Heart right ventricle (tissue), 16 donors: ENCODE measurements at regions of chr4 and their contacts with region 1.

Region 1: GRCh38 chr4:140153718-140154571 is at the start of gene MAML3:
- DNase-seq: peak; percentile 95
- ATAC-seq: peak; percentile 62 to 83 (median 74)
- H3K4me3 ChIP-seq: peak within 1 kb of the TSS; percentile 65 to 92 (median 84)
- H3K27ac ChIP-seq: peak within 1 kb of the TSS; percentile 85 to 100 (median 99)
- H3K4me1 ChIP-seq: peaks cover 0 to 44% (median 7%) of the 10 kb centered on the region in 9 donors
- H3K27me3 ChIP-seq: no peaks in the 10 kb centered on the region
- CTCF ChIP-seq: no peak
- total RNA-seq, gene MAML3: 1.3 to 4.6 (median 2.8) TPM

Region 2: DNA sequence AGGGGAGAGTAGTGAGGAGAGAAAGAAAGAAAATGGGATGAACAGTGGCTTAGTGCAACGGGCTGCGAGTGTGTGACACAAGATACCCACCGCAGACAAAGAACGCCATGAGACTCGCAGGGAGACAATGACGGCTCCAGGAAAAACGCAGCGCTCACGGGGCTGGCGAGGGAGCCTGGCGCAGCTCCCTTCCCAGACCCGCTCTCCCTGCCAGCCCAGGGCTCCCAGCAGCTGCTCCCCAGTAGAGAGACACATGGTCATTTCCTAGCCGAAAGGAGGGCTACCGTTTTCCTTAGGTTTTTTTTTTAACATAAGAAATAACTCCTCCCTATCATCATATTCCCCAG is 149.4 kb before region 1 on chr4:
- intact Hi-C with region 1: loop called in 1 of 10 experiments (anchors 10 kb)
- DNase-seq: peak; percentile 46 to 64
- ATAC-seq: peak; percentile 85 to 96 (median 93)
- H3K4me3 ChIP-seq: peak overlapping the region in 9 of 10 donors; percentile 38 to 55 (median 51)
- H3K27ac ChIP-seq: peak overlapping the region in 8 of 10 donors; percentile 8 to 73 (median 58)
- H3K4me1 ChIP-seq: peaks cover 6 to 40% (median 18%) of the 10 kb centered on the region in 9 donors
- H3K27me3 ChIP-seq: no peaks in the 10 kb centered on the region
- CTCF ChIP-seq: no peak

Region 3: DNA sequence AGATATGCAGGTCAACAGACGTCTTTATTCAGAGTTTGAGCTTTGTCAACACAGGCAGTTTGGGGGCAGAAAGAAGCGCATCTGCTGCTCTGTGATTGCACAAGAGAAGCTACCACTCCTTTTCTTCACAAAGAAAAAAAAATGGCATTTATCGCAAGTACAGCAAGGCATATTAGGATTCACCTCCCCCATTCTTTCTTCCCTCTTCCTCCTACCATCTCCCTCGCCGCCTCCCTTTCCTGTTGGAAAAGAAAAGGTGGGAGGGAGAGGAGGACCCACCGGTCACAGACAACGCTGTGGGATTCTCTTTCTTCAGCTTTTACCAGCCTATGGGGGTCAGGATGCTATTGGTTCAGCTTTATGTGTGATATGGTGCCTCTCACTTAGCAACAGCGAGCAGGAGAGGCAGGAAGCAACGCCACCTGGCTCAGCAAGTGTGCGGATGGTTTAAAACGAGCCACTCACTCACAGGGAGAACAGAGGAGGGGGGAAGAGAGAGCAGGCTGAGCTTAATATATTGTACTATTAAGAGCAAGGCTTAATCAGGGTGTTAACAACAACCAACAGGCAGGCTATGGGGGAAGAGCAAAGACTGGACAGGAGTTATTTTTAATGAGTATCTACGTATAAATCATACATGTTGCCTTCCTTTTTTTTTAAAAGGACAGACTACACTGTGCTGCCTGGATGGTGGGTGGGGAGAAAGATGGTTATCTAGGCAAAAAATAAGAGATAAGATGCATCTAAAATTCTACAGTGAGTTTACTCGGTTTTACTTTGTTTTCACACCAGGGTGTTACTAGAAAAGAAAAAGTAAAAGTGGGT is 104.7 kb before region 1 on chr4:
- intact Hi-C with region 1: loop called in 8 of 10 experiments (anchors 1 to 5 kb)
- DNase-seq: peak; percentile 15 to 56
- ATAC-seq: peak; percentile 60 to 90 (median 83)
- H3K4me3 ChIP-seq: peak overlapping the region in 9 of 10 donors; percentile 16 to 55 (median 49)
- H3K27ac ChIP-seq: peak overlapping the region in 9 of 10 donors; percentile 21 to 84 (median 66)
- H3K4me1 ChIP-seq: peaks cover 2 to 60% (median 46%) of the 10 kb centered on the region in 9 donors
- H3K27me3 ChIP-seq: no peaks in the 10 kb centered on the region
- CTCF ChIP-seq: peak in 4 of 9 donors; percentile 9 to 57 (median 50)

Region 4: GRCh38 chr4:140237606-140237986 is 83.7 kb after region 1 on chr4:
- intact Hi-C with region 1: loop called in 5 of 10 experiments (anchors 2 to 5 kb)
- DNase-seq: peak; percentile 72 to 76
- ATAC-seq: peak; percentile 80 to 90 (median 86)
- H3K4me3 ChIP-seq: peak overlapping the region in 8 of 10 donors; percentile 2 to 37 (median 30)
- H3K27ac ChIP-seq: peak overlapping the region; percentile 66 to 92 (median 83)
- H3K4me1 ChIP-seq: peaks cover 10 to 48% (median 29%) of the 10 kb centered on the region in 9 donors
- H3K27me3 ChIP-seq: no peaks in the 10 kb centered on the region
- CTCF ChIP-seq: no peak

Region 5: DNA sequence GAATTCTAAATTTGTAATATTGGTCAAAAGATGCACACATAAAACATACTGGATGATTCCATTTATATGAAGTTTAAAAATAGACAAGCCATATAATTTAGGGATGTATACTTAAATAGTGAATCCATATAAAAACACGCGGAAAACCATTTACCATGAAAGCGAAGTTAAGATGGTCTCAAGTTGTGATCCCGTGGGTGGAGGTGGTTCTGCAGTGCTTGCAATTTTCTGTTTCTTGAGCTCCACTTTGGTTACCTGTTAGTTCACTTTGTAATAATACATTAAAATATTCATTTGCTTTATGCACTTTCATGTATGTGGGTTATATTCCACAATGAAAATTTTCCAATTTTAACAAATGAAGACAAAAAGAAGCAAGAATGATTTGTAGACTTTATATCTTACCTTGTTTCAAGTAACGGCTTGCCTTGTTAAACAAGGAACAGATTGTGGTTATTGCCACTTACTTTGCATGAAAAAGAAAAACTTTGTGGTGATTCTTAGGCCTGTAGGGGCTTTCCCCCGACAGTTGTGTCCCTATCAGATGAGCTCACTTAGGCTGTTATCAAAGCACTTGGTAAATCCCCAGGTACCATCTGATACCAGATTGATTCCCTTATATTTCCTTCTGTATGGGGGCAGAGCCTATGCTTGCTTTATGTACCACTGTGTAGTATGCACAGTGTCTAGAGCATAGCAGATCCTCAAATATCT is 402.6 kb after region 1 on chr4:
- intact Hi-C with region 1: no loop called
- DNase-seq: no peak
- ATAC-seq: no peak
- H3K4me3 ChIP-seq: no peak overlapping the region
- H3K27ac ChIP-seq: no peak overlapping the region
- H3K4me1 ChIP-seq: no peaks in the 10 kb centered on the region
- H3K27me3 ChIP-seq: peaks cover 0 to 2% (median 0%) of the 10 kb centered on the region in 7 donors
- CTCF ChIP-seq: no peak